Heart left ventricle (tissue), 16 donors: ENCODE measurements at regions of chr15 and their contacts with region 1.

Region 1: GRCh38 chr15:23039151-23039916 is at the start of gene TUBGCP5:
- DNase-seq: peak; percentile 97 to 99 (median 98)
- ATAC-seq: peak; percentile 97 to 99 (median 98)
- H3K4me3 ChIP-seq: peak within 1 kb of the TSS; percentile 57 to 92 (median 72)
- H3K27ac ChIP-seq: peak within 1 kb of the TSS; percentile 63 to 93 (median 80)
- H3K4me1 ChIP-seq: peaks cover 0 to 17% (median 12%) of the 10 kb centered on the region in 12 donors
- H3K27me3 ChIP-seq: no peaks in the 10 kb centered on the region
- CTCF ChIP-seq: peak in 10 of 12 donors; percentile 14 to 56 (median 40)
- POLR2A ChIP-seq: peak; percentile 17 to 94
- total RNA-seq, gene TUBGCP5: 9.5 to 14.7 (median 13.2) TPM

Region 2: DNA sequence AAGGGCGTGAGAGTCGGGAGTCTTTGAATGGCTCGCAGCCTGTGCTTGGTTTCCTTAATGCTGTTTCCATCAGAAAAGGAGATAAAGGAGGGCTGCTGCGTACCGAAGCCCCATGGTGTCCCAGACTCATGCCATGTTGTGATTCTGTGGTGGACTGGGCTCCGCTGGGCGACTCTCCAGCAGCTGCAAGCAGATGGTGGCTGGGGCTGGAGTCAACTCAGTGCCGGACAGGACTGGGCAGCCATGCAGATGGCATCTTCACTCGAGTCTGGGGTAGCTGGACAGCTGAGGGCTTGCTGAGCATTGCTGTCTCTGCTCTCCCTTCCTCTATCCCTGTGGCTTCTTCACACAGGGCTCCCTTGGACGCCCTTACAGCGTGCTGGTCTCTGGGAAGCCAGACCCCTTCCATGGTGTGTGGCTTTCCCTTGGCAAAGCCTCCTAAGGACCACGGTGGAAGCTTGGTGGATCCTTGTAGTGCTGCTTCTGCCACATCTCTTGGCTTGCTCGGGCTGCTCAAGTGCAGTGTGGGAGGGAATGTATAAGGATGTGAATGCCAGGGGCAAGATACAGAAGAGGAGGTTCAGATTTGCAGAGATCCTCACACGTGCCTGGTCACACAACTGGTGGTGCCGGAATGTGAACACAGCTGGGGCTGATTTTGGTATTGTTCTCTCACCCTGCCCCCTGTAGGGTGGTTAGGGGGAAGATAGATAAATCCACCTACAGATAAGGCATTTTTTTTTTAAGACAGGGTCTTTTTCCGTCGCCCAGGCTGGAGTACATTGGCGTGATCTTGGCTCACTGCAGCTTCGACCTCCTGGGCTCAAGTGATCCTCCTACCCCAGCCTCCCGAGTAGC is 243.9 kb before region 1 on chr15:
- intact Hi-C with region 1: no loop called
- DNase-seq: no peak
- ATAC-seq: peak in 1 of 4 donors; percentile 33
- H3K4me3 ChIP-seq: no peak overlapping the region
- H3K27ac ChIP-seq: no peak overlapping the region
- H3K4me1 ChIP-seq: no peaks in the 10 kb centered on the region
- H3K27me3 ChIP-seq: no peaks in the 10 kb centered on the region
- CTCF ChIP-seq: no peak
- POLR2A ChIP-seq: no peak

Region 3: DNA sequence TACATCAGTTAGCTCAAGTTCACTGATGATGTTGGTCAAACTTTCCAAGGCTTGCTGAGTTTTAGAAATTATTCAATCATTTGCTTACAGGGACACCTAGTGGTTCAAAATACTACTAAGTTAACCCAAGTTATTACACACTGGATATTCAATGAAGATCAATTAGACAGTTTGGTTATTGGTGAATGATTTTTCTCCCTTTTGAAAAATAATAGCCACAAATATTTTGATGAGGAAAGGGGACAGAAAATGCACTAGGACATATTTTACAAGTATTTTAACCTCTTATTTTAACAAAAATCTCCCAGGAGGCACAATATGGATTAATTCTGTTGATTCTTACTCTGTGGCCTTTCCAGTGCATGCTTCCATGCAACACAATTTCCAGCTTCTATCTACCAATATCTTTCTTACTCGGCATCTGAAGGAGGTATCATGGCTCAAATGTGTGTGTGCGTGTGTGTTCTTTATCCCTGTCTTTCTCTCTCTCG is 427.8 kb after region 1 on chr15:
- intact Hi-C with region 1: loop called in 4 of 10 experiments (anchors 5 to 10 kb)
- DNase-seq: no peak
- ATAC-seq: peak in 3 of 4 donors; percentile 41 to 51 (median 48)
- H3K4me3 ChIP-seq: no peak overlapping the region
- H3K27ac ChIP-seq: no peak overlapping the region
- H3K4me1 ChIP-seq: no peaks in the 10 kb centered on the region
- H3K27me3 ChIP-seq: peaks cover 0 to 3% (median 0%) of the 10 kb centered on the region in 9 donors
- CTCF ChIP-seq: peak in 11 of 12 donors; percentile 20 to 58 (median 45)
- POLR2A ChIP-seq: no peak